Heart left ventricle (tissue), 16 donors: ENCODE measurements at regions of chr13 and their contacts with region 1.

Region 1: DNA sequence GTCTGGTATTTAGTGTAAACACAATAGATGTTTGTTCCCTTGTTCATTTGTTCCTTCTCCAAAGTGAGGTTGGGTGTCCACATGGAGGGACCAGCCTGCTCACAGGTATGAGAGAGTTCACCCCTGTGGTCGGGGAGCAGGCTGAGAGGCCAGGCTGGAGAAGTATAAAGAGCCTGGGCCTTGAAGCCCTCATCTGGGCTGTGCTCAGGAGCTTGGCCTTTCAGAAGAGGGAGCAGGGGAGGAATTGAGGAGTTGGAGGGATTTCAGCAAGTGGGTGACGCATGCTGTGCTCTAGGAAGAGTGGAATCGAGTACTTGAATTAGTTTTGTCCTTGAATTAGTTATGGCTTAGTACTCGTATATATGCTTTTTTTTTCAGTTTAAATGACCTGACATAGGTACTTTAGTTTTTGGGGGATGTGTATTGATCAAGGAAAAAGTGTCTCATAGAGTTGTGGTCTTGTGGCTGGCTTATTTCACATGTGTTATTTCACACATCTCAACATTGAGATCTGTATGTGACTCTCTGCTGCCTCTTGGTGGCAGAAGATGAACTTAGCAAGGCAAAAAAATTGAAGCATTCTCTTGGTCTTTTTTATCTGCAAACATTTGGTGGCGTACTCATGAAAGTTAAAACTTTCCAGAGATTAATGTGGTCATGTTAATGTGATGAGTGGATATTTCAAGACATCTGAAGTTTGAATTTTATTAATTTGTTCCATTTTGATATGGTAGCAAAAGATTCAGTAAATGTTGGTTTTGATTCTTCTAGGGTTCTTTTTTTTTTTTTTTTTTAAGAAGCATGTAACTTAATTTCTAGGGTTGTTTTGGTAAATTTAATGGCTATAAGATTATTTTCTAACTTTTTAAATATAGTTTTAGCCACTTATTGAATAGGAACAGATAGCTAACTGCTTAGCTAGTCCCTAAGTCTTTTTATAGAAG is 54.3 kb downstream of the SLAIN1 start:
- DNase-seq: peak in 1 of 5 donors; percentile 12
- ATAC-seq: peak in 3 of 4 donors; percentile 51 to 78 (median 70)
- H3K4me3 ChIP-seq: no peak overlapping the region
- H3K27ac ChIP-seq: no peak overlapping the region
- H3K4me1 ChIP-seq: peaks cover 0 to 6% (median 0%) of the 10 kb centered on the region in 12 donors
- H3K27me3 ChIP-seq: no peaks in the 10 kb centered on the region
- CTCF ChIP-seq: peak; percentile 57 to 83 (median 74)
- POLR2A ChIP-seq: no peak

Region 2: GRCh38 chr13:77492982-77493381 is 258.8 kb before region 1 on chr13:
- intact Hi-C with region 1: loop called in 5 of 10 experiments (anchors 5 to 10 kb)
- DNase-seq: no peak
- ATAC-seq: peak in 1 of 4 donors; percentile 49
- H3K4me3 ChIP-seq: no peak overlapping the region
- H3K27ac ChIP-seq: no peak overlapping the region
- H3K4me1 ChIP-seq: peaks cover 0 to 6% (median 0%) of the 10 kb centered on the region in 12 donors
- H3K27me3 ChIP-seq: no peaks in the 10 kb centered on the region
- CTCF ChIP-seq: peak in 10 of 12 donors; percentile 26 to 54 (median 43)
- POLR2A ChIP-seq: no peak

Region 3: DNA sequence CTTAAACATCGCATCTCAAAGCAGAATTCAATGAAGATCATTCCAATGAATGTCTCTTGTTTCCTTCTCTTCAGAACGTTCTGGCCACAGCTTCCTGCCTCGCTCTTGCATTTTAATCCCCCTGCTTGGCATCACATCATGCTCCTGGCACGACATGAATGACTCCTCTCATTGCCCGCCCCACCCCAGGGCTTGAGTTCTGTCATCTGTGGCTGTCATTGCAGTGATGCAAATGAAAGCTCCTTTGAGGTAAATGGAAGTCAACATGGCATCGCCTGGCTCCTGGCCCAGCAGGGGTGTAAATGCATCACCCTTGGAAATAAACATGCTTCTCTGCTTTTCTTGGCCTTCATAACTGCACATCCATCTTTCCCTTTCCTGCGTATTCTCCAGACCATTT is 167.7 kb before region 1 on chr13:
- intact Hi-C with region 1: loop called in 2 of 10 experiments (anchors 5 to 10 kb)
- DNase-seq: no peak
- ATAC-seq: no peak
- H3K4me3 ChIP-seq: no peak overlapping the region
- H3K27ac ChIP-seq: no peak overlapping the region
- H3K4me1 ChIP-seq: peaks cover 0 to 5% (median 0%) of the 10 kb centered on the region in 12 donors
- H3K27me3 ChIP-seq: peaks cover 0 to 7% (median 0%) of the 10 kb centered on the region in 9 donors
- CTCF ChIP-seq: no peak
- POLR2A ChIP-seq: no peak

Region 4: GRCh38 chr13:77599351-77599750 is 152.4 kb before region 1 on chr13:
- intact Hi-C with region 1: loop called in 3 of 10 experiments (anchors 5 to 10 kb)
- DNase-seq: no peak
- ATAC-seq: no peak
- H3K4me3 ChIP-seq: no peak overlapping the region
- H3K27ac ChIP-seq: no peak overlapping the region
- H3K4me1 ChIP-seq: no peaks in the 10 kb centered on the region
- H3K27me3 ChIP-seq: peaks cover 0 to 21% (median 0%) of the 10 kb centered on the region in 9 donors
- CTCF ChIP-seq: no peak
- POLR2A ChIP-seq: no peak

Region 5: DNA sequence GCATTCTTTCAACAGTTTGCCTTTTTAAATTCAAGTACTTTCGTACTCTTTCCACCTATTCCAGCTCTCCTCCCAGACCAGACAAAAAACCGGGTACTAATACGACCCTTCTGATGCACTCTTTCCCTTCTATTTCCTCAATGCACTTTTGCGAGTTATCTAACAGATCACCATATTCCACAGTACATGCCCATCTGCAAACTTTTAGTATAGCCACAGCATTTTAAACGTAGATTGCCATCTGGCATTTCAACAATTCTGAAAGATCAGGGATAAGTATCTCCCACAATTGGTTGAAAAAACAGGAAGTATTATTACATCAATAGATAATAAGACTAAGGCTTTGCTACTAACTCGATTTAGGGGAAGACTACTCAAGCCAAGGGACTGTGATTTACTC is 1622.8 kb after region 1 on chr13:
- intact Hi-C with region 1: no loop called
- DNase-seq: no peak
- ATAC-seq: no peak
- H3K4me3 ChIP-seq: no peak overlapping the region
- H3K27ac ChIP-seq: no peak overlapping the region
- H3K4me1 ChIP-seq: peaks cover 0 to 7% (median 0%) of the 10 kb centered on the region in 12 donors
- H3K27me3 ChIP-seq: no peaks in the 10 kb centered on the region
- CTCF ChIP-seq: no peak
- POLR2A ChIP-seq: no peak